T-cell (primary cell): ENCODE measurements at regions of chr17 and their contacts with region 1.

Region 1: DNA sequence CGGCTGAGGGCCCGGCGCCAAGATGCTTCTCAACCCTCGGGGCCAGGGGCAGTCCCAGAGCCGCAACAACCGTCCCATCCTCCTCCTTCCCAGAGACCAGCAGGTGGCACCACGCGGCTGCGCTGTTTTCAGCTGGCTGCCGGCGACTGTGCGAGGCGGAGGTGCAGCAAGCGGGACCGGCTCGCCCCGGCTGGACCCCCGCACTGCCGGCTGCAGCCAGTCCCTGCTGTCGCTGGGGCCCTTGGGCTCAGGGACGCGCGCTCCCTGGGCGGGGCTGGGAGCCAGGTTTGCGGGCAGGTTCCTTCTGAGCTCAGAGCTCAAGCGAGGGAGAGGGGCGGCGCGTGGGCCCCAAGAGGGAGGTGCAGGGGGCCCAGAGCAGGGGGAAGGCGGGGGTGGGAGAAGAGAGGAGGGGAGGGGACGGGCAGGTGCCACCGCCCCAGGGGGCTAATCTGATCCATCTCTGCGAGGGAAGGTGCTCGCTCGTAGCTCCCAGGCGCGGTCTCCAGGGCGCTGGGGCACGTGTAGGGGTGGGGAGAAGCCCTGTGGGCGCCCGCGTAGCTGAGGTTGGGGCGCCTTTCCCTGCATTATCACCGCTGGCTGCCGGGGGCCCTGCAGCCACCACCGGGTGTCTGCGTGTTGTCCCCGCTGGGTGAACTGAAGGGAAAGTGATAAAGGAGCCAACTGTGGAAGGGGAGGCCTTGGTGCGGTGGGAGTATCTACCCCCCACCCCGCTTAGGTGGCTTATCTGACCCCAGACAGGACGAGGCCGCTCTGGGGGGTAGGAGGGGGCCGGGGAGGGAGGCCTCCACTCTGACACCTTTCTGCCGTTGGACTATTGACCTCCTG is 24.2 kb downstream of the STAT5A start:
- DNase-seq: peak; percentile 47 to 88 (median 70)
- ATAC-seq: peak; percentile 67 to 75 (median 74)
- H3K4me3 ChIP-seq: peak overlapping the region; percentile 23 to 42
- H3K4me3 Mint-ChIP-seq: peak overlapping the region; percentile 53 to 77 (median 56)
- H3K27ac ChIP-seq: peak overlapping the region; percentile 45
- H3K27ac Mint-ChIP-seq: peak overlapping the region; percentile 92 to 95
- H3K4me1 ChIP-seq: peaks cover 69 to 89% of the 10 kb centered on the region in 2 experiments
- H3K4me1 Mint-ChIP-seq: peaks cover 73 to 78% (median 77%) of the 10 kb centered on the region in 3 donors
- H3K27me3 ChIP-seq: no peaks in the 10 kb centered on the region
- H3K27me3 Mint-ChIP-seq: no peaks in the 10 kb centered on the region

Region 2: DNA sequence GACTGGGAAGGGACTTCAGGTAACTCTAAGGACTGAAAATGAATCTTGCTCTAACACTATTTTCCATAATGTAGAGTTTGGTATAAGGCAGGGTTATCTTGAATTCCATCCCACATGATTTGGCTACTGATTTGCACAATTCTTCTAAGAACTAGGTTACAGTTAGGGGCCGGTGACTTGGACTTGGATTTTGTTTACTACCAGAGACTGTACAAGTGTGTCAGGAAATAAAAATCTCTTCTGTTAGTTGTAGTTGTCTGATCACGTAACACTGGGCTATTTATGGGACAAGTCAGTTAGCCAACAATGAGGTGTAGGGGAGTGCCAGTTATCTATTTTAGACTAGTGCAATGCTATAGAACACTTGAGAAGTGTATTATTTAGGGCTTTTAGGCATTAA is 78.6 kb before region 1 on chr17:
- CTCF ChIA-PET with region 1: interaction called in 1 of 2 experiments, 4 read pairs
- POLR2A ChIA-PET with region 1: interaction called in 1 of 2 experiments, 12 read pairs
- DNase-seq: no peak
- ATAC-seq: no peak
- H3K4me3 ChIP-seq: no peak overlapping the region
- H3K4me3 Mint-ChIP-seq: no peak overlapping the region
- H3K27ac ChIP-seq: no peak overlapping the region
- H3K27ac Mint-ChIP-seq: peak overlapping the region; percentile 60 to 69
- H3K4me1 ChIP-seq: peaks cover 0 to 13% of the 10 kb centered on the region in 2 experiments
- H3K4me1 Mint-ChIP-seq: peaks cover 45 to 53% (median 53%) of the 10 kb centered on the region in 3 donors
- H3K27me3 ChIP-seq: no peaks in the 10 kb centered on the region
- H3K27me3 Mint-ChIP-seq: no peaks in the 10 kb centered on the region

Region 3: GRCh38 chr17:42260318-42260717 is 52.2 kb before region 1 on chr17:
- CTCF ChIA-PET with region 1: no interaction called
- POLR2A ChIA-PET with region 1: no interaction called
- DNase-seq: no peak
- ATAC-seq: no peak
- H3K4me3 ChIP-seq: no peak overlapping the region
- H3K4me3 Mint-ChIP-seq: no peak overlapping the region
- H3K27ac ChIP-seq: no peak overlapping the region
- H3K27ac Mint-ChIP-seq: peak overlapping the region in 1 of 2 donors; percentile 44
- H3K4me1 ChIP-seq: peaks cover 7 to 23% of the 10 kb centered on the region in 2 experiments
- H3K4me1 Mint-ChIP-seq: peaks cover 40 to 54% (median 52%) of the 10 kb centered on the region in 3 donors
- H3K27me3 ChIP-seq: no peaks in the 10 kb centered on the region
- H3K27me3 Mint-ChIP-seq: no peaks in the 10 kb centered on the region